ENCODE measurements at regions of chr4 and their contacts with region 1.

Region 1: GRCh38 chr4:76067652-76068286 is 6.7 kb upstream of the ART3 start:
- DNase-seq: peak in 9 of 10 donors; percentile 31 to 93 (median 71)

Region 2: DNA sequence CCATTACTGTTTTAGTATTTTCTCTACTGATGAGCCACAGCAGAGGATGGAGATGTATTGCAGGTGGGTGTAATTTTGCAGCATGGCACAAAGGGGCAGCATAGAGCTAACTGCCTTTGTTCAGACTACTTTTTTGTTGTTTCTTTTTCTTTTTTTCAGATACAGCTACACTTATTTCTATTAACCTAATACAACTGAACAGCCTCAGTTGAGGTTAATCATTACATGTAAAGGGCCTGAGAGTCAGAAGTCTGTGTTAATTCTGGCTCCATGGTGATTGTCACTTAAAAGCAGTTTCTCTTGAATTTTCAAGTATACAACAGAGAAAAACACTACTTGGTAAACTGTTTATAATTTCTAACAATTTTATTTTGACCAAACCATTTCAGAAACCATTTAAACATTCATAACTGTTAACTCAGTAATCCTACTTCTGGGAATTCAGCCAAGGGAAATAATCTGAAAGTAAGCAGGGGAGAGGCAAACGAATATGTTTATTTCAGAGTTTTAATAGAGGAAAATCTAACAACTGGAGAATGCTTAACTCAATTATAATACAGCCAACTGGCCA is 151.6 kb before region 1 on chr4:
- intact Hi-C with region 1: loop called (anchors 5 kb)
- DNase-seq: peak in 3 of 10 donors; percentile 20 to 52 (median 20)

Measured in posterior cingulate gyrus (tissue), 11 donors.